Prostate gland (tissue), 2 donors: ENCODE measurements at regions of chr16 and their contacts with region 1.

Region 1: GRCh38 chr16:13767215-13767614 is 152.7 kb upstream of the ERCC4 start:
- DNase-seq: no peak
- H3K4me3 ChIP-seq: no peak overlapping the region
- H3K27ac ChIP-seq: no peak overlapping the region
- H3K4me1 ChIP-seq: no peaks in the 10 kb centered on the region
- H3K27me3 ChIP-seq: no peaks in the 10 kb centered on the region
- CTCF ChIP-seq: peak in 3 of 4 experiments; percentile 30 to 56 (median 33)
- POLR2A ChIP-seq: no peak

Region 2: DNA sequence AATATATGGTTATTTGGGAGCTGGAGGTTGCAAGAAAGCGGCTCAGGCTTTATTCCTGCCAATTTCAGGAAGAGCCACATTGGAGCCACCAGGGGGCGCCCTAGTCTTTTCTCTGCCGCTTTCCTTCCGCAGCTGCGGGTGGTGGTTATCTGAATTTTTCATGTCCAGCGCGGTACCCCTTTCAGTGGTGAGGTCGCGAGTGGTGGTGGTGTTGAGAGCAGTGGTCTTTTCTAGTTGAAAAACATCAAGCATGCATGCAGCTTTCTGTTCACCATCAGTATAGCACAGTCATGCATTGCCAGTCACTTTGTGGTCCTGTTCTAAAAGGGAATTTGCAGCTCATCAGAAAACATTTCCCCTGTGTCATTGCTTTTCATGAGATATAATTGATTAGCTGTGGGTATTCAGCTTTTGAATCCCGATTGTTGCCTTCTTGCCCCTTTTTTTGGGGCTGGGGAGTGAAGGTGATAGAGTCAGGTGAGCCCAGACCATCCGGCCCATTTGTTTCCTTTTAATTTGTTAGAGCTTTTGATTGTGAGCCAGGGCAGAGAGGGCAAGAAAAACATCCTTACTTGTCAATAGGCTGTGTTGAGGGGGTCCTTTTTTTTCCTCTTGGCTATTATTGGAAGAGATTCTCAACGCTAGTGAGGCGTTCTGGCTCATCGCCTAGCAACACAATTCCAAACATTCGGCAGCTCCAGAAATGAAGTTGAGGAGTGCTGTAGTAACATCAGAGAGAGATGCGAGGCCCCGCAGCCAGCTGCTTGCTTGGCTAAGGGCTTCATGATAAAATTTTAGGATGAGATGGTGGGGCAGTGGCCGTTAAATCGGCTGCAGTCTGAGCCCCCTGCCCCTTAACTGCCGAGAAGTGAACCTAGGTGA is 1671.7 kb before region 1 on chr16:
- intact Hi-C with region 1: loop called (anchors 5 kb)
- DNase-seq: peak; percentile 62
- H3K4me3 ChIP-seq: no peak overlapping the region
- H3K27ac ChIP-seq: no peak overlapping the region
- H3K4me1 ChIP-seq: peaks cover 8% of the 10 kb centered on the region
- H3K27me3 ChIP-seq: no peaks in the 10 kb centered on the region
- CTCF ChIP-seq: peak; percentile 75 to 94 (median 84)
- POLR2A ChIP-seq: no peak

Region 3: DNA sequence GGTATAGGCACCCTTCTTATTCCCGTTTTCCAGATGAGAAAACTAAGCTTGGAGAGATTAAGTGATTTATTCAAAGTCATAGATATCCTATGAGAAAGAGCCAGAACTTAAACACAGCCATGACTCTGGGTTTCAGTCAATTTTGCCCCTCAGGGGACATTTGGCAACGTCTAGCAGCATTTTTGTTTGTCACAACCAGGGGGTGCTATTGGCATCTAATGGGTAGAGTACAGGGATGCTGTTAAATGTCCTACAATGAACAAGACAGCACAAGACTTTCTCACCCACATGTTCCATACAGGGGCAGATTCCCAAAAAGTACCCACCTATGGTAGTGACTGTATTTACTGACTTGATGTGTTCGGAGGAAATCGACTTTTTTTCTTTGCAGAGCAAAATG is 870.7 kb before region 1 on chr16:
- intact Hi-C with region 1: loop called (anchors 10 kb)
- DNase-seq: no peak
- H3K4me3 ChIP-seq: no peak overlapping the region
- H3K27ac ChIP-seq: no peak overlapping the region
- H3K4me1 ChIP-seq: no peaks in the 10 kb centered on the region
- H3K27me3 ChIP-seq: no peaks in the 10 kb centered on the region
- CTCF ChIP-seq: peak in 3 of 4 experiments; percentile 15 to 46 (median 31)
- POLR2A ChIP-seq: no peak

Region 4: GRCh38 chr16:13561291-13562070 is 205.7 kb before region 1 on chr16:
- intact Hi-C with region 1: no loop called
- DNase-seq: no peak
- H3K4me3 ChIP-seq: no peak overlapping the region
- H3K27ac ChIP-seq: no peak overlapping the region
- H3K4me1 ChIP-seq: no peaks in the 10 kb centered on the region
- H3K27me3 ChIP-seq: no peaks in the 10 kb centered on the region
- CTCF ChIP-seq: no peak
- POLR2A ChIP-seq: no peak

Region 5: GRCh38 chr16:13873835-13874438 is 106.7 kb after region 1 on chr16:
- intact Hi-C with region 1: no loop called
- DNase-seq: no peak
- H3K4me3 ChIP-seq: no peak overlapping the region
- H3K27ac ChIP-seq: no peak overlapping the region
- H3K4me1 ChIP-seq: no peaks in the 10 kb centered on the region
- H3K27me3 ChIP-seq: no peaks in the 10 kb centered on the region
- CTCF ChIP-seq: peak in 1 of 4 experiments; percentile 7
- POLR2A ChIP-seq: no peak